Activated T-helper 1 cell treated with anti-CD3 and anti-CD28 coated beads, Interleukin-12 subunit alpha, Interleukin-12 subunit beta, Interleukin-2, Interleukin-4 antibody, amounts not matched to agents 30 ng/mL and 10 ng/mL and 1 ng/mL, durations not matched to agents 14 hours and 24 hours and 36 hours (primary cell): ENCODE measurements at regions of chrX and their contacts with region 1.

Region 1: DNA sequence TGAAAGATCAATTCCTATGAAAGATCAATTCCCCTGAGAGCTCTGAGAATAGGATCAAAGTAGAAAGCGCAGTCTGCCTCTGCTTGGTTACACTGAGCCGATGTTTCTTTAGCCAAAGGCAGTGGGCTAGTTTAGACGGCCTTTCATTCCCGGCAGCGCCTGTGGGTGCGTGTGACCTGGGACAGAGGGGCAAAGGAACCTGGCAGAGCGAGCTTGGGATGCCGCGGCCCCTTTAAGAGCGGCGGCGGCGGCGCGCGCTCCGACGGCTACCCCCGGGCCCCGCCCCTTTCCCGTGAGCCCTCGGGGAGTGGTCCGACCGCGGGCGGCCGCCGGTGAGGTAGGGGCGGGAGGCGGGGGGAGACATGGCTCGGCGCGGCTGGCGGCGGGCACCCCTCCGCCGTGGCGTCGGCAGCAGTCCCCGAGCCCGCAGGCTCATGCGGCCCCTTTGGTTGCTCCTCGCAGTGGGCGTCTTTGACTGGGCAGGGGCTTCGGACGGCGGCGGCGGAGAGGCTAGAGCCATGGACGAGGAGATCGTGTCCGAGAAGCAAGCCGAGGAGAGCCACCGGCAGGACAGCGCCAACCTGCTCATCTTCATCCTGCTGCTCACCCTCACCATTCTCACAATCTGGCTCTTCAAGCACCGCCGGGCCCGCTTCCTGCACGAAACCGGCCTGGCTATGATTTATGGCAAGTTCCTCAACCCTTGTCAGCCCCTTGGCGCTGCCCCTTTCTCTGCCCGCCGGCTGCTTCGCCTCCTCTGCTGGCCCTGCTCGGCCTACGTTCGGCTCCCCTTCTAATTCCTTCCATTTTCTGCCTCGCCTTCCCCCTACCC is at the start of gene SLC9A6:
- DNase-seq: peak; percentile 59
- H3K4me3 Mint-ChIP-seq: peak within 1 kb of the TSS; percentile 92
- H3K27ac Mint-ChIP-seq: peak within 1 kb of the TSS; percentile 86
- H3K4me1 Mint-ChIP-seq: peaks cover 52% of the 10 kb centered on the region
- H3K27me3 Mint-ChIP-seq: no peaks in the 10 kb centered on the region
- total RNA-seq, gene SLC9A6: 12.7 and 13.4 TPM in 2 replicates

Region 2: GRCh38 chrX:135931644-135932487 is 53.5 kb before region 1 on chrX:
- intact Hi-C with region 1: no loop called
- DNase-seq: peak; percentile 4
- H3K4me3 Mint-ChIP-seq: no peak overlapping the region
- H3K27ac Mint-ChIP-seq: no peak overlapping the region
- H3K4me1 Mint-ChIP-seq: no peaks in the 10 kb centered on the region
- H3K27me3 Mint-ChIP-seq: peaks cover 1% of the 10 kb centered on the region

Region 3: DNA sequence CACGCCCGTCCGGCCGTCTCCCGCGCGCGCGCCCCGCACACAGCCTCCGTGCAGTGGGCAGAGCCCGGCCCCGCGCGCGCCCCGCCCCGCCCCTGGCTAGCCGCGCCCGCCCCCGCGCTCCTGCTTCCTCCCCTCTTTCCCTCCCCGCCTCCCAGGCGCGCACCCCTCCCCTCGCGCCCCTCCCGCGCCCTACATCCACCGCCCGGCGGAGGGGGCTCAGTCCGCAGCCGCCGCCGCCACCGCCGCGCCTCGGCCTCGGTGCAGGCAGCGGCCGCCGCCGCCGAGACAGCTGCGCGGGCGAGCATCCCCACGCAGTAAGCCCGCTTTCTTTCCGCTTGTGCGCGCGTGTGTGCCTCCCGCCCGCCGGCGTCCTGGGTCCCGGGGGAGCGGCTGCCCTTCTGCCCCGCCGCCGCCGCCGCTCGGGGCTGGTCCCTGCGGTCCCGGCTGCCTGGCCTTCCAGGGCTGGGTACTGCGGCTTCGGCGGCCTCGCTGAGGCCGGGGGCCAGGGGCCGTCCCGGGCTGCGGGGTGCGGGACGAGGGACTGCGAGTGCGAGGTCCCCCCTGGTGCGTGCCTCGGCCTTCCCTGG is 162.1 kb after region 1 on chrX and contains the start of gene FHL1:
- intact Hi-C with region 1: loop called (anchors 5 kb)
- DNase-seq: peak; percentile 22
- H3K4me3 Mint-ChIP-seq: peak within 1 kb of the TSS; percentile 85
- H3K27ac Mint-ChIP-seq: peak within 1 kb of the TSS; percentile 21
- H3K4me1 Mint-ChIP-seq: peaks cover 20% of the 10 kb centered on the region
- H3K27me3 Mint-ChIP-seq: peaks cover 5% of the 10 kb centered on the region
- total RNA-seq, gene FHL1: 8.5 and 8.7 TPM in 2 replicates

Region 4: DNA sequence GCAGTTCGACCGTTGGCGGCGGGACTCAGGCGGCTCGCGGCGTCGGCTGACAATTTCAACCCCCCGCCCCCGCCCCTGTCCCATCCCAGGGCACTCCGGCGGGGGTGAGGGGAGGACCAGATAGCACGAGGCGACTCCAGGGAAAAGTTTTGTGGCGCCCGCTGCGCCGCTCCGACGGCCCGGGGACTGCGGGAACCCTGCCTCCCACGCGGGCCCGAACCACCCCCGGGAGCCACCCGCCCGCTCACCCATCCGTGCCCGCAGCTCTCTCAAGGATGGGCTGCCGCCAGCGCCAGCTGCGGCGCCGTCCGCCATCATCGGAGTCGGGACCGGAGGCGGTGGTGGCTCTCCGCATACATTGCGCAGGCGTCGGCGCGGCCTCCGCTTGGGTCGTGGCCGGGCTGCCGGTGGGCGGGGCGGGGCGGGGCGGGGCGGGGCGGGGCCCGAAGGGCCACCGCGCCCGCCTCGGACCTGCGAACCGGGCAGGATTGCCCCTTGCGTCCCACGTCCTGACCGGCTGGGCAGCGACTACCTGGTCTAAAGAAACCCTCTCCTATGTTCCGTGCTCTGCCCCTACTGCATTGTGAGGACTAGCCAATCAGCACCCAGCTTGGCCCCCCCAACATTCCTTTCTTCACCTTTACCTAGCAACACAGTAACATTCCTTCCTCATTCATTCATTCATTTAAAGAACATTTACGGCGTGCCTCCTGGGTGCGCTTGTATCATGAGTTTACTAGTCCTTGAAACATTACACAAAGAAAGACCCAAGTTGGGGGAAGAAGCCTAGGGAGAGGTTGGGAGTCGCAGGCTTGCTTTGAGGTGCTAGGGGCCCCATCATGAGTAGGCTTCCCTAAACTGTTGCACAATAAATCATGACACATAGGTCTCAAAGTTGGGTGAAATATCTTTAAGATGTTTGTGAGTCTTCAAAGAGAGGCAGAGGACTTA is 266.0 kb after region 1 on chrX and contains the start of gene MAP7D3:
- intact Hi-C with region 1: loop called (anchors 2 kb)
- DNase-seq: peak; percentile 61
- H3K4me3 Mint-ChIP-seq: peak within 1 kb of the TSS; percentile 87
- H3K27ac Mint-ChIP-seq: peak within 1 kb of the TSS; percentile 94
- H3K4me1 Mint-ChIP-seq: peaks cover 16% of the 10 kb centered on the region
- H3K27me3 Mint-ChIP-seq: no peaks in the 10 kb centered on the region
- total RNA-seq, gene MAP7D3: 27.3 and 29.1 TPM in 2 replicates

Region 5: DNA sequence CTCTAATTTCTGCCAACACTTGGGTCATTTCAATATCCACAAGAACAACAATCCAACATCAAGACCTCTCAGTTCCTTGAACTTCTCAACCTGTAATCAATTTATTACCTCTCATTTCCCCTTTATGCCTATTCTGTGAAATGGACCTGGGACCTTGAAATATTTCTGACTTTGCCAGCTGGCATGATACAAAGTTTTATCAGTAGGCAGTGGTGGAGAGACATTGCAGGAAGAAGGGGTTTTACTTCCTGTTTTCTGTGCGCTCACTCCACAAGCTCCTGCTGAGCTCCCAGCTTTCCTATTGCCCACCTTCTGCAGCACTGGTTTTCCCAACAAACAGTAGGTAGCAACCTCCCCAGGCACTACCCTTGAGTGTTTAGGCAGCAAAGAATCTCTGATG is 798.9 kb after region 1 on chrX:
- intact Hi-C with region 1: no loop called
- DNase-seq: no peak
- H3K4me3 Mint-ChIP-seq: peak overlapping the region; percentile 22
- H3K27ac Mint-ChIP-seq: no peak overlapping the region
- H3K4me1 Mint-ChIP-seq: peaks cover 37% of the 10 kb centered on the region
- H3K27me3 Mint-ChIP-seq: no peaks in the 10 kb centered on the region